Activated CD8-positive, alpha-beta T cell treated with anti-CD3 and anti-CD28 coated beads for 36 hours (primary cell): ENCODE measurements at regions of chr14 and their contacts with region 1.

Region 1: GRCh38 chr14:92783816-92784431 is 10.2 kb upstream of the GOLGA5 start:
- DNase-seq: peak; percentile 61
- ATAC-seq: peak; percentile 72
- H3K4me3 Mint-ChIP-seq: no peak overlapping the region
- H3K27ac Mint-ChIP-seq: no peak overlapping the region
- H3K4me1 Mint-ChIP-seq: peaks cover 15% of the 10 kb centered on the region
- H3K27me3 Mint-ChIP-seq: no peaks in the 10 kb centered on the region
- CTCF ChIP-seq: peak; percentile 84

Region 2: GRCh38 chr14:92651106-92651757 is 132.7 kb before region 1 on chr14:
- CTCF ChIA-PET with region 1: no interaction called
- POLR2A ChIA-PET with region 1: no interaction called
- intact Hi-C with region 1: no loop called
- DNase-seq: peak; percentile 94
- ATAC-seq: peak; percentile 82
- H3K4me3 Mint-ChIP-seq: peak overlapping the region; percentile 94
- H3K27ac Mint-ChIP-seq: peak overlapping the region; percentile 97
- H3K4me1 Mint-ChIP-seq: peaks cover 73% of the 10 kb centered on the region
- H3K27me3 Mint-ChIP-seq: no peaks in the 10 kb centered on the region
- CTCF ChIP-seq: no peak

Region 3: GRCh38 chr14:92686900-92687444 is 97.0 kb before region 1 on chr14:
- CTCF ChIA-PET with region 1: interaction called, 41 read pairs
- POLR2A ChIA-PET with region 1: no interaction called
- intact Hi-C with region 1: no loop called
- DNase-seq: peak; percentile 67
- ATAC-seq: peak; percentile 81
- H3K4me3 Mint-ChIP-seq: no peak overlapping the region
- H3K27ac Mint-ChIP-seq: peak overlapping the region; percentile 25
- H3K4me1 Mint-ChIP-seq: no peaks in the 10 kb centered on the region
- H3K27me3 Mint-ChIP-seq: no peaks in the 10 kb centered on the region
- CTCF ChIP-seq: peak; percentile 99

Region 4: DNA sequence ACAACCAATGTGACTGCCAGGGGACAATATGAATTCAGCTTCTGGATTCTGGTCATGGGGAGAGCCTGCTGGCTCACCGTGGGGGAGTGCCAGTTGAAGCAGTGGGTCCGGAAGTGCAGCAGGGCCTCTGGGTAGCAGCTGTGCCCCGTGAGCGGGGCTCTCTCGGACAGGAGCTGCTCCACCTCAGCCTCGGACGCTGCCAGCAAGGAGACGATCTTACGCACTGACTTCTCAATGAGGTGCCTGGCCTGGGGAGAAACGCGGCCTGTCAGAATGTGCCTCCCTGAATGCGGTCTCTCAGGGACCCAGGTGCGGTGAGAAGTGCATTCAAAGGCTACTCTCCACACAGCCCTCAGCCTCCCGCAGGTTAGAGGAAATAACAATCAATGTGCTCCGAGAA is 77.5 kb before region 1 on chr14:
- CTCF ChIA-PET with region 1: interaction called, 100 read pairs
- POLR2A ChIA-PET with region 1: no interaction called
- intact Hi-C with region 1: no loop called
- DNase-seq: no peak
- ATAC-seq: no peak
- H3K4me3 Mint-ChIP-seq: no peak overlapping the region
- H3K27ac Mint-ChIP-seq: no peak overlapping the region
- H3K4me1 Mint-ChIP-seq: peaks cover 3% of the 10 kb centered on the region
- H3K27me3 Mint-ChIP-seq: no peaks in the 10 kb centered on the region
- CTCF ChIP-seq: no peak

Region 5: GRCh38 chr14:92717571-92718042 is 66.3 kb before region 1 on chr14:
- CTCF ChIA-PET with region 1: interaction called, 100 read pairs
- POLR2A ChIA-PET with region 1: interaction called, 4 read pairs
- intact Hi-C with region 1: loop called (anchors 1 kb)
- DNase-seq: peak; percentile 43
- ATAC-seq: peak; percentile 44
- H3K4me3 Mint-ChIP-seq: no peak overlapping the region
- H3K27ac Mint-ChIP-seq: no peak overlapping the region
- H3K4me1 Mint-ChIP-seq: no peaks in the 10 kb centered on the region
- H3K27me3 Mint-ChIP-seq: no peaks in the 10 kb centered on the region
- CTCF ChIP-seq: no peak

Region 6: GRCh38 chr14:92744198-92744597 is 39.7 kb before region 1 on chr14:
- CTCF ChIA-PET with region 1: interaction called, 10 read pairs
- POLR2A ChIA-PET with region 1: no interaction called
- intact Hi-C with region 1: no loop called
- DNase-seq: no peak
- ATAC-seq: no peak
- H3K4me3 Mint-ChIP-seq: no peak overlapping the region
- H3K27ac Mint-ChIP-seq: no peak overlapping the region
- H3K4me1 Mint-ChIP-seq: peaks cover 22% of the 10 kb centered on the region
- H3K27me3 Mint-ChIP-seq: peaks cover 24% of the 10 kb centered on the region
- CTCF ChIP-seq: no peak

Region 7: DNA sequence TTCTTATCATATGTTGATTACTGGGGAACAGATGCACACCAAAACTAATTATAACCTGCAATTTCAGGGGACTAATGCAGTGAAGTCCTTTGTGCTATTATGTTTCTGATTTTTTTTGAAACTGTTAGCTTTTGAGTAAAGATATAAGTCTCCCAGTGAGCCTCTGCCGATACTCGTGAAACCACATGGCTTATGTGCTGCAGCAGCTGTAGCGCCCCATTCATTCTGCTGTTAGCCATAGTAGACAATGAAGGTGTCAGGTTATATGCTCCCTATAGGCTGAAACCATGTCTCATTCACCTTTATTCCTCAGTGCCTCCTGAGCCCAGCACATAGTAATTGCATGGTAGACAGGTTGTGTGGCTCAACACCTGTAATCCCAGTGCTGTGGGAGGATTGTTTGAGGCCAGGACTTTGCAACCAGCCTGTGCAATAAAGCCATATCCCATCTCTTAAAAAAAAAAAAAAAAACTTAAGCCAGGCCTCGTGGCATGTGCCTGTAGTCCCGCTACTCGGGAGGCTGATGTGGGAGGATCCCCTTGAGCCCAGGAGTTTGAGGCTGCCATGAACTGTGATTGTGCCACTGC is 35.2 kb after region 1 on chr14:
- CTCF ChIA-PET with region 1: no interaction called
- POLR2A ChIA-PET with region 1: no interaction called
- intact Hi-C with region 1: no loop called
- DNase-seq: no peak
- ATAC-seq: no peak
- H3K4me3 Mint-ChIP-seq: no peak overlapping the region
- H3K27ac Mint-ChIP-seq: no peak overlapping the region
- H3K4me1 Mint-ChIP-seq: no peaks in the 10 kb centered on the region
- H3K27me3 Mint-ChIP-seq: no peaks in the 10 kb centered on the region
- CTCF ChIP-seq: no peak

Region 8: GRCh38 chr14:92832137-92832700 is 48.3 kb after region 1 on chr14:
- CTCF ChIA-PET with region 1: no interaction called
- POLR2A ChIA-PET with region 1: no interaction called
- intact Hi-C with region 1: no loop called
- DNase-seq: no peak
- ATAC-seq: no peak
- H3K4me3 Mint-ChIP-seq: no peak overlapping the region
- H3K27ac Mint-ChIP-seq: no peak overlapping the region
- H3K4me1 Mint-ChIP-seq: no peaks in the 10 kb centered on the region
- H3K27me3 Mint-ChIP-seq: no peaks in the 10 kb centered on the region
- CTCF ChIP-seq: no peak